ENCODE measurements at regions of chr9 and their contacts with region 1.

Region 1: DNA sequence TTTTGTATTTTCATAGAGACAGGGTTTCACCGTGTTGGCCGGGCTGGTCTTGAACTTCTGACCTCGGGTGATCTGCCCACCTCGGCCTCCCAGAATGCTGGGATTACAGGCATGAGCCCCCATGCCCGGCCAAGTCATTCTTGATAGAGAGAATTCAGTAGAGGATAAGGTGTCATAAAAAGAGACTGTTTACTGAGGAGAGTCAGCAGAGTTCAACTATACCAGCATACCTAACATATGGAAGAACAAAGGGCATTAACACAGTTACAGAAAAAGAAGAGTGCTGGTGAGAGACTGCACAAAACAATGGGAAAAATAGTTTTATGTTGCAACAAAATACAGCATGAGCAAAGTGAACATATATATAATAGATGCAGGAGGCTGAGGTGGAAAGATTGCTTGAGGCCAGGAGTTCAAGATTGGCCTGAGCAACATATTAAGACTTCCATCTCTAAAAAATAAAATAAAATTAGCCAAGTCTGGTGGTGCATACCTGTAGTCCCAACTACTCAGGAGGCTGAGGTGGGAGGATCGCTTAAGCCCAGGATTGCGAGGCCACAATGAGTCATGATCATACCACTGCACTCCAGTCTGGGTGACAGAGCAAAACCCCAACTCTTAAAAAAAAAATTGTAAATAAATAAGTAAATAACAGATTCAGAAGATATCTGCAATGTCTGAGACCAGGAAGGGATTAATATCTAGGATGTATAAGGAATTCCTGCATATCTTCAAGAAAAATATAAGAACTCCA is 19.5 kb downstream of the B4GALT1 start:
- DNase-seq: peak; percentile 9 to 23
- H3K4me3 ChIP-seq: no peak overlapping the region
- H3K27ac ChIP-seq: no peak overlapping the region
- H3K4me1 ChIP-seq: peaks cover 0 to 99% (median 65%) of the 10 kb centered on the region in 4 donors
- H3K27me3 ChIP-seq: no peaks in the 10 kb centered on the region
- CTCF ChIP-seq: no peak

Region 2: DNA sequence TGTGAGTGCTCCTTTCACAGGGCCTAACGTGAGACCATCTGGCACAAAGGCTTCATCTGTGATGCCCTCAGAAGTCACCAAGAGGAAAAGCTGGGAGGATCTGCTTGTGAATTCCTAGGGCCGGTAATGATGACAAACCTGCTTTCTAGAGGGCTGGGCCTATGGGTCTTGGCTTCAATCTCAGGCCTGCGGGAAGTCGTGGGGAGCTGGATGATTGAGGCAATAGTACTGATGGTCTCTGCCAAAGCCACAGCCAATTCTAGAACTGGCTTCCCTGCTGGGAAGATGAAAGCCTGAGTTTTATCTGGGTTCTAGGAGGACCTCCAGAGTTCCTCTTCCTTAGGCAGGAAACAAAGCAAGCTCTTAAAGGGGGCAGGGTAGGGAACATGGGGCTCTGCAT is 261.6 kb before region 1 on chr9:
- intact Hi-C with region 1: no loop called
- DNase-seq: no peak
- H3K4me3 ChIP-seq: no peak overlapping the region
- H3K27ac ChIP-seq: no peak overlapping the region
- H3K4me1 ChIP-seq: no peaks in the 10 kb centered on the region
- H3K27me3 ChIP-seq: no peaks in the 10 kb centered on the region
- CTCF ChIP-seq: no peak

Region 3: DNA sequence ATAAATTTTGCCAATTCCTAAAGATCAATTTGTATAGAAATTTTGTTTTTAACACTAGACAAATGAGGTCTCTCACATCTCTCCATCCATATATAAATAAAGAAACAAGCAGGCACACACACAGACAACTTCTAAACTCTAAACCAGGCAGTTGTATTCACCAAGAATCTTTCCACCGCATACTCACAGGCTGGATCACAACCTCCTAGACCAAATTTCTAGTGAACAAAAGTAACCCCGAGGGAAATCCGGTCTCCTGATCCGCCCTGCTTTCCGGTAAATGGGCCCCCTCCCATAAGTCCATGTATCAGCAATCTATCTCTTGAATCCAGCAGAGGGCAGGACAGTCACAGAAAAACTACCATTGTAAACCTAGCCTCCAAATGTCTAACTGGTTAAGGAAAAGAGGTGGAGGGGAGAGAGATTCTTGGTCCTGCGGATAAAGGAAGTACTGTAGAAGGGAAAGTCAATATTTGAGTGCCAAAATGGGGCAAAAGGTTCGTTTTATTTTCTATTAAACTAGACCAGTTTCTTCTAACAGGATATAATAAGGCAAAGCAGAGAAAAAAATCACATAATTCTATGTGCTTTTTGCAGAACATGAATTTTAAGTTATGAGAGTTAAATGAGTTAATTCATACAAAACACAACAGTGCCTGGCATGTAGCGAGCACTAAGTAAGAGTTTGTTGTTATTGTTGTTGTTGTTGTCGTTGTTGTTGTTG is 66.3 kb before region 1 on chr9:
- intact Hi-C with region 1: no loop called
- DNase-seq: peak in 1 of 2 donors; percentile 69
- H3K4me3 ChIP-seq: no peak overlapping the region
- H3K27ac ChIP-seq: peak overlapping the region; percentile 47 to 52
- H3K4me1 ChIP-seq: peaks cover 0 to 35% (median 24%) of the 10 kb centered on the region in 4 donors
- H3K27me3 ChIP-seq: no peaks in the 10 kb centered on the region
- CTCF ChIP-seq: peak; percentile 63 to 91

Region 4: DNA sequence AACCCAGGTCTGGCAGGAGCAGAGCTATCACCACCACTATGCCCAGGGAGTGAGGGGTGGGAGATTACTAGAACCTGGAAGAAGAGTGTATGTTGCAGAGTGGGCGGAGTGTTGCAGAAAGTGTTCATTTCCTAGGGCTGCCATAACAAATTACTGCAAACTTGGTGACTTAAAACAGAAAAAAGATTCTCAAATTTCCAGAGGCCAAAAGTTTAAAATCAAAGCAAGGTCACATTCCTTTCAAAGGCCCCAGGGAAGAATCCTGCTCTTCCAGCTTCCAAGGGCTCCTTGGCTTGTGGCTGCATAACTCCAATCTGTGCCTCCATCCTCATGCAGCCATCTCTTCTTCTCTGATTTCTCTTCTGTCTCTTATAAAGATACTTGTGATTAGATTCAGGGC is 61.8 kb after region 1 on chr9:
- intact Hi-C with region 1: loop called (anchors 5 kb)
- DNase-seq: no peak
- H3K4me3 ChIP-seq: no peak overlapping the region
- H3K27ac ChIP-seq: no peak overlapping the region
- H3K4me1 ChIP-seq: peaks cover 0 to 6% (median 2%) of the 10 kb centered on the region in 4 donors
- H3K27me3 ChIP-seq: no peaks in the 10 kb centered on the region
- CTCF ChIP-seq: no peak

Measured in tibial artery (tissue), 4 donors.